OCI-LY7 (cell line): ENCODE measurements at regions of chr7 and their contacts with region 1.

Region 1: DNA sequence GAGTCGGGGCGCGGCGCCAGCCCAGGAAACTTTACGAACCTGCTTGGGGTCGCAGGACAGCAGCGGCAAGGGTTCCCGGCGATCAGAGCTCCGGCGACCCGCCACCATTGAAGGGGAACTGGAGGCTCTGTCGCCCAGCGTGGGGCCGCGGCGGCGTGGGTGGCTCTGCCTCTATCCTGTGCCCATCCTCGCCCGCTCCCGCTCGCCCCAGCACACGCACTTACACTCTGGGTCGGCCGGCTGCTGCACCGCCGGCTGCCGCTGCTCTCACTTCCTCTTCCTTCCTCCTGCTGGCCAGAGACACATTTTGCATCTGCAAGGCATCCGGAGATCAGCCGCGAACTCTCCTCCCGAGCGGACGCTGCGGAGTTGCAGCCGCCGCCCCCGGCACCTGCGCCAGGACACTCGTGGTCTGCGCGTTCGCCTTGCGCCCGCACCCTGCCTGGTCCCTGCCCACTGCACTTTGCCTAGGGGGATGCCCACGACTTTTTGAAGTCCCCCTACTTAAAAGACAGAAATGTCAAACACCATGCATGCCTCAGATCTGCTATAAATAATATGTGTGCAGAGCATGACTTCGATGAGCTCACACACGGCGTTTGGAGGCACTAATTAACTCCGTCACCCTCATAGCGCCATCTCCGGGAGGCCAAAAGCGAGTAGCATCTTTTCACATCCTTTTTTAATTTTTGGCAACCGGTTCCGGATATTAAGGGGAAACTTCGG is at the start of gene ELMO1:
- DNase-seq: peak; percentile 89
- H3K4me3 ChIP-seq: peak within 1 kb of the TSS; percentile 67
- H3K27ac ChIP-seq: peak within 1 kb of the TSS; percentile 22
- H3K4me1 ChIP-seq: peaks cover 19% of the 10 kb centered on the region
- CTCF ChIP-seq: peak; percentile 67
- total RNA-seq, gene ELMO1: 102 and 103 TPM in 2 replicates

Region 2: DNA sequence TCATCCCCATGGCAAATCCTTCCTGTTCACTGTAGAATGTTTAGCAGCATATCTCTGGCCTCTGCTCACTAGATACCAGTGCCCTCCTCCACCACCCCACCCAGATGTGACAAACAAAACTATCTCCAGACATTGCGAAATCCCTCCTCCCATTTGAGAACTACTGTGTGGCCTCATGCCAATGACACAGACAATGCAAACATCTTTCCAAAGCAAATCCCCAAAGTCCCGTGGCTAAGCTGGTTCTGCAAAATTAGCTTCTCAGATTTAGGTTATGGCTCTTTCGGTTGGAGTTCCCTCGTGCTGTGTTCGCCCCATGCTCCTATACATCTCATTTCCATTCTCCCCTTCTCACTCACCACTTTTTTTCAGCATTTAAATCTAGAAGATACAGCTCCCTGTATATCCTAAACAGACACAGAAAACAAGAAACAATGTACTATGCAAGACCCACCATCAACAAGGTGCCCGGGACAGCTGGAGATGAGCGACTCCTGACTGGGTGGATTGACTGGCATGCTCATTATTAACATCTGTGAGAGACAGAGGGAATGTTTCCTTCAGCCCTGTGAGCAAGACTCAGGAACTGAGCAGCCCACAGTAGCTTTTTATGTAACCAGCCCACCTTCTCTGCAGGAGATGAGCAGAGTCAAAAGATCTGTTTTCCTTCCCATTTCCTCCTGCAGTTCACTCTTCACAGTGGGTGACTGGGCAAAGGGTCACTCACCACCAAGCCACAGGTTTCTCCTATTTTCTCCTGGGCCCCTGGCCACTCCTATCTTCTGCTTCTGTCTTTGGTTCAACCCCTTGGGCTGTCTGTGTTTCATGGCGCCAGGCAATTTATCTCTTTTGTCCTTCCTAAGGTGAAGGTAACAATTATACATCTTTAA is 498.8 kb before region 1 on chr7:
- CTCF ChIA-PET with region 1: no interaction called
- POLR2A ChIA-PET with region 1: no interaction called
- intact Hi-C with region 1: no loop called
- DNase-seq: no peak
- H3K4me3 ChIP-seq: no peak overlapping the region
- H3K27ac ChIP-seq: no peak overlapping the region
- H3K4me1 ChIP-seq: peaks cover 3% of the 10 kb centered on the region
- CTCF ChIP-seq: no peak

Region 3: DNA sequence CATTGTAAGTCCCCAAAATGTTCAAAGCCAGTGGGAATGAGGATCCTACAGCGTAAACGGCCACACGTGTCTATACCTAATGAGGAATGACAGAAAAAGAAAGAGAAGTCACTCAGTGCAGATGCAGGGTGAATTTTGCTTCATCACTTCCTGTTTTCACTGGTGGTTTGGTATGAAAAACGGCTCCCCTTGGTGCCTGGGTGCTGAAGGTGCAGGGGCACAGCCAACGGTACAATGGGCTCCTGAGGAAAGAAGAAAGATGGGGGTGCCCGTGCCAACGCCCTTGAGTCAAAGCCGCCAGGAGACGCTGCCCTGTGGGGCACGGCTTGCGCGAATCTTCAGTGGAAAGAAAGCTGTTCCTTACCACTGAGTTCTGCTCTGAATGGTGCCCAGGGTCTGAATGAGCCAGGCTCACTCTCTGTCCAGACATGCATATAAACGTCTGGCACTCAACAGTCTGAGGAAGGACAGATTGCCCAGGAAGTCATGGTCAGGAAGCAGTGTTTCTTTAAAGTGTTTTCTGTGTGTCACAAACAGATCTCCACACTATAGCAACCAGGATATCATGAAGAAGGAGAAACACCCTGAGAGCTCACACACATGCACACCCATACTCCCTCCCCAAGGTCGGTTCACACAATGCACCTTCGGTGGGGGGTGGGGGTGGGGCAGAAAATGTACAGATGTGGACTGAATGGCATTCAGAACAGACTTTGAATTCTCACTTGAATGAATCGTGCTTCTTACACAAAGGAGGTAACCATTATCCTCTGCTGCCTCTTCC is 105.9 kb before region 1 on chr7:
- CTCF ChIA-PET with region 1: no interaction called
- POLR2A ChIA-PET with region 1: interaction called, 3 read pairs
- intact Hi-C with region 1: loop called (anchors 1 kb)
- DNase-seq: peak; percentile 89
- H3K4me3 ChIP-seq: peak overlapping the region; percentile 89
- H3K27ac ChIP-seq: peak overlapping the region; percentile 94
- H3K4me1 ChIP-seq: peaks cover 60% of the 10 kb centered on the region
- CTCF ChIP-seq: peak; percentile 70

Region 4: GRCh38 chr7:37480041-37481031 is 31.5 kb after region 1 on chr7:
- CTCF ChIA-PET with region 1: no interaction called
- POLR2A ChIA-PET with region 1: no interaction called
- intact Hi-C with region 1: no loop called
- DNase-seq: no peak
- H3K4me3 ChIP-seq: no peak overlapping the region
- H3K27ac ChIP-seq: no peak overlapping the region
- H3K4me1 ChIP-seq: no peaks in the 10 kb centered on the region
- CTCF ChIP-seq: no peak